Kidney (tissue), 22 donors: ENCODE measurements at regions of chr15 and their contacts with region 1.

Region 1: DNA sequence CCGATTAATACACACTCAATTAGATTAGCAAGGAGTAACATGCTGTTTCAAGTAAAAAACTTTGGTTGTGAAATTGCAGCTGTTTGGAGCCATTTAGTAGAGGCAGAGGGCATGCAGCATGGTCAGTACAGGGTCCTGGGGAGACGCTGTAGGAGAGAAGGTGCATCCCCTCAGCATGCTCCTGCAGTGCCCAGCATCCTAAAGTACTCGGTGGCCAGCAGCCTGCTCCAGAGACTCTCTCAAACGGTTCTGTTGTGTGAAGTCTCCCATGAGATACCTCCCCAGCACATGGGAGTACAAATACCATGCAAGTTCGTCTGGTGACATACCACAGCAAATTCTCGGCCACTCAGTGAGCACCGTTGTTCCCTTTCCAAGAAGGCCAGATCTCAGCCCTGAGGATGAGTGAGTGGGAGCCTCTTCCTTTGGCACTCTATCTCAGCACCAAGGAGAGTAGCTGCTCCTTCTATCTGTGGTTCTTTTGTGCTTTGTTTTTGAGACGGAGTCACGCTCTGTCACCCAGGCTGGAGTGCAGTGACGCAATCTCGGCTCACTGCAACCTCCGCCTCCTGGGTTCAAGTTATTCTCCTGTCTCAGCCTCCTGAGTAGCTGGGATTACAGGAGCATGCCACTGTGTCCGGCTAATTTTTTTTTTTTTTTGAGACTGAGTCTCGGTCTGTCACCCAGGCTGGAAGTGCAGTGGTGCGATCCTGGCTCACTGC is 72.7 kb downstream of the TJP1 start:
- DNase-seq: no peak
- H3K4me3 ChIP-seq: no peak overlapping the region
- H3K27ac ChIP-seq: no peak overlapping the region
- H3K4me1 ChIP-seq: no peaks in the 10 kb centered on the region
- H3K27me3 ChIP-seq: no peaks in the 10 kb centered on the region
- CTCF ChIP-seq: no peak

Region 2: DNA sequence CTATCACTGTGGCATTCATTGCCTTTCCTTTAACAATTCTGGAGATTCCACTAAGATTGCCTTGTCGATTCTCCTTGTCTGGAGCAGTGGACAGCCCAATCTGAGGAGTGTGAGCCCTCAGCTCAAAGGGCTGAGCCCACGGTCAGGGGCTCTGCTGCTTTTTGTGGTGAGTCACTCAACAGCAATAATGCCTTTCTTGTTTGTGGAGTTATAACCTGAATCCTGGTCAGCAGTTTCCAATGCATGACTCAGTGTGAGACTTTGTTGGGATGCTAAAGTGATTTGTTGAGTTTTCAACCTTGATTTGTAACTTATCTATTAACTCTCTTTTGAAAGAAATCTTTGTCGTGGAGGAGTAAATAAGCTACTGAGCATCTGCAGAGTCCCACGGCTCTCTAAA is 110.7 kb before region 1 on chr15:
- intact Hi-C with region 1: no loop called
- DNase-seq: no peak
- H3K4me3 ChIP-seq: no peak overlapping the region
- H3K27ac ChIP-seq: no peak overlapping the region
- H3K4me1 ChIP-seq: no peaks in the 10 kb centered on the region
- H3K27me3 ChIP-seq: no peaks in the 10 kb centered on the region
- CTCF ChIP-seq: no peak

Region 3: GRCh38 chr15:29821416-29822131 is 72.0 kb after region 1 on chr15:
- intact Hi-C with region 1: no loop called
- DNase-seq: peak; percentile 85 to 93 (median 89)
- H3K4me3 ChIP-seq: peak overlapping the region; percentile 77 to 96 (median 95)
- H3K27ac ChIP-seq: peak overlapping the region; percentile 95 to 96
- H3K4me1 ChIP-seq: peaks cover 3 to 6% (median 4%) of the 10 kb centered on the region in 3 donors
- H3K27me3 ChIP-seq: no peaks in the 10 kb centered on the region
- CTCF ChIP-seq: peak; percentile 17

Region 4: GRCh38 chr15:29925227-29926082 is 175.9 kb after region 1 on chr15:
- intact Hi-C with region 1: loop called (anchors 10 kb)
- DNase-seq: peak; percentile 76 to 87 (median 81)
- H3K4me3 ChIP-seq: no peak overlapping the region
- H3K27ac ChIP-seq: peak overlapping the region; percentile 5 to 23
- H3K4me1 ChIP-seq: peaks cover 6 to 10% (median 9%) of the 10 kb centered on the region in 3 donors
- H3K27me3 ChIP-seq: no peaks in the 10 kb centered on the region
- CTCF ChIP-seq: peak; percentile 40